ENCODE measurements at regions of chr16 and their contacts with region 1.

Region 1: GRCh38 chr16:80526425-80527061 is 14.2 kb upstream of the DYNLRB2 start:
- DNase-seq: peak; percentile 43 to 70
- H3K4me3 ChIP-seq: no peak overlapping the region
- H3K4me3 Mint-ChIP-seq: no peak overlapping the region
- H3K27ac Mint-ChIP-seq: no peak overlapping the region
- H3K4me1 ChIP-seq: no peaks in the 10 kb centered on the region
- H3K4me1 Mint-ChIP-seq: no peaks in the 10 kb centered on the region
- H3K27me3 ChIP-seq: no peaks in the 10 kb centered on the region
- H3K27me3 Mint-ChIP-seq: peaks cover 18% of the 10 kb centered on the region
- CTCF ChIP-seq: peak; percentile 82 to 91

Region 2: GRCh38 chr16:80273635-80274538 is 252.7 kb before region 1 on chr16:
- CTCF ChIA-PET with region 1: no interaction called
- POLR2A ChIA-PET with region 1: no interaction called
- intact Hi-C with region 1: no loop called
- DNase-seq: no peak
- H3K4me3 ChIP-seq: no peak overlapping the region
- H3K4me3 Mint-ChIP-seq: no peak overlapping the region
- H3K27ac Mint-ChIP-seq: no peak overlapping the region
- H3K4me1 ChIP-seq: peaks cover 4% of the 10 kb centered on the region
- H3K4me1 Mint-ChIP-seq: peaks cover 12% of the 10 kb centered on the region
- H3K27me3 ChIP-seq: no peaks in the 10 kb centered on the region
- H3K27me3 Mint-ChIP-seq: no peaks in the 10 kb centered on the region
- CTCF ChIP-seq: no peak

Region 3: GRCh38 chr16:80369138-80369958 is 157.2 kb before region 1 on chr16:
- CTCF ChIA-PET with region 1: no interaction called
- POLR2A ChIA-PET with region 1: no interaction called
- intact Hi-C with region 1: no loop called
- DNase-seq: peak; percentile 74 to 79
- H3K4me3 ChIP-seq: no peak overlapping the region
- H3K4me3 Mint-ChIP-seq: no peak overlapping the region
- H3K27ac Mint-ChIP-seq: no peak overlapping the region
- H3K4me1 ChIP-seq: peaks cover 9% of the 10 kb centered on the region
- H3K4me1 Mint-ChIP-seq: peaks cover 10% of the 10 kb centered on the region
- H3K27me3 ChIP-seq: no peaks in the 10 kb centered on the region
- H3K27me3 Mint-ChIP-seq: no peaks in the 10 kb centered on the region
- CTCF ChIP-seq: peak; percentile 68 to 84

Region 4: GRCh38 chr16:80500526-80500925 is 26.0 kb before region 1 on chr16:
- CTCF ChIA-PET with region 1: interaction called, 4 read pairs
- POLR2A ChIA-PET with region 1: no interaction called
- intact Hi-C with region 1: loop called (anchors 1 kb)
- DNase-seq: peak in 1 of 2 experiments; percentile 2
- H3K4me3 ChIP-seq: no peak overlapping the region
- H3K4me3 Mint-ChIP-seq: no peak overlapping the region
- H3K27ac Mint-ChIP-seq: no peak overlapping the region
- H3K4me1 ChIP-seq: no peaks in the 10 kb centered on the region
- H3K4me1 Mint-ChIP-seq: no peaks in the 10 kb centered on the region
- H3K27me3 ChIP-seq: no peaks in the 10 kb centered on the region
- H3K27me3 Mint-ChIP-seq: peaks cover 8% of the 10 kb centered on the region
- CTCF ChIP-seq: no peak

Region 5: GRCh38 chr16:80512593-80512853 is 14.0 kb before region 1 on chr16:
- CTCF ChIA-PET with region 1: interaction called, 10 read pairs
- POLR2A ChIA-PET with region 1: no interaction called
- intact Hi-C with region 1: no loop called
- DNase-seq: no peak
- H3K4me3 ChIP-seq: no peak overlapping the region
- H3K4me3 Mint-ChIP-seq: no peak overlapping the region
- H3K27ac Mint-ChIP-seq: no peak overlapping the region
- H3K4me1 ChIP-seq: no peaks in the 10 kb centered on the region
- H3K4me1 Mint-ChIP-seq: no peaks in the 10 kb centered on the region
- H3K27me3 ChIP-seq: no peaks in the 10 kb centered on the region
- H3K27me3 Mint-ChIP-seq: peaks cover 18% of the 10 kb centered on the region
- CTCF ChIP-seq: no peak

Region 6: DNA sequence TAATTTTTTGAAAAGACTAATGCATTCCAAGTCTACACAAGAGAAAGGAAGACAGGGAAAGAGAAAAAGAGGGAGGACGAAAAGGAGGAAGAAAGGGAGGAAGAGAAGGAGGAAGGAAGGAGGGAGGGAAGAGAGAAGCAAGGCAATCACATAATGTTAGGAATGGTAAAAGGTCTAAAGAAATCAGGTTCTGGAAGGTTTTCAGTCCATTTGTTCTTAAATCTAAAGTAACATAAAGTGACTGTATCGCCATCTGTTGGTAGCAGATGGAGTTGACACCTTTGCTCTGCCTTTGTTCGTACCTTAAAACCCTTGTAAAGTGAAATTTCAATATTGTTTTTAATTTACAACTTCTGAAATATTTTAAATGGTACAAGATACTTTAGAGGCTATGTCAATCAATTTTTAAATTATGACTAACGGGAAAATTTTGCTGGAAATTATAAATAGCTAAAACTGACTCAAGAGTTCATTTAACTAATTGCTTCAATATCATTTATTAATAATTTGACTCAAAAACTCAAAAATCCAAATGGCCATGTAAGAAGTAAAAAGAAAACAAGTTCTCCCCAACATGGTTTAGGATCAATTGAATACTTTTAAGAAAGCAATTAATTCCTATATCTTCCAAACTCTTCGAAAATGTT is 298.3 kb after region 1 on chr16:
- CTCF ChIA-PET with region 1: no interaction called
- POLR2A ChIA-PET with region 1: no interaction called
- intact Hi-C with region 1: loop called (anchors 1 kb)
- DNase-seq: peak in 1 of 2 experiments; percentile 40
- H3K4me3 ChIP-seq: no peak overlapping the region
- H3K4me3 Mint-ChIP-seq: no peak overlapping the region
- H3K27ac Mint-ChIP-seq: no peak overlapping the region
- H3K4me1 ChIP-seq: no peaks in the 10 kb centered on the region
- H3K4me1 Mint-ChIP-seq: no peaks in the 10 kb centered on the region
- H3K27me3 ChIP-seq: no peaks in the 10 kb centered on the region
- H3K27me3 Mint-ChIP-seq: peaks cover 10% of the 10 kb centered on the region
- CTCF ChIP-seq: peak; percentile 87 to 88